Head of caudate nucleus (tissue), 42 donors: ENCODE measurements at regions of chr5 and their contacts with region 1.

Region 1: GRCh38 chr5:140346348-140347101 is at the start of gene HBEGF:
- DNase-seq: peak; percentile 61 to 94 (median 87)

Region 2: DNA sequence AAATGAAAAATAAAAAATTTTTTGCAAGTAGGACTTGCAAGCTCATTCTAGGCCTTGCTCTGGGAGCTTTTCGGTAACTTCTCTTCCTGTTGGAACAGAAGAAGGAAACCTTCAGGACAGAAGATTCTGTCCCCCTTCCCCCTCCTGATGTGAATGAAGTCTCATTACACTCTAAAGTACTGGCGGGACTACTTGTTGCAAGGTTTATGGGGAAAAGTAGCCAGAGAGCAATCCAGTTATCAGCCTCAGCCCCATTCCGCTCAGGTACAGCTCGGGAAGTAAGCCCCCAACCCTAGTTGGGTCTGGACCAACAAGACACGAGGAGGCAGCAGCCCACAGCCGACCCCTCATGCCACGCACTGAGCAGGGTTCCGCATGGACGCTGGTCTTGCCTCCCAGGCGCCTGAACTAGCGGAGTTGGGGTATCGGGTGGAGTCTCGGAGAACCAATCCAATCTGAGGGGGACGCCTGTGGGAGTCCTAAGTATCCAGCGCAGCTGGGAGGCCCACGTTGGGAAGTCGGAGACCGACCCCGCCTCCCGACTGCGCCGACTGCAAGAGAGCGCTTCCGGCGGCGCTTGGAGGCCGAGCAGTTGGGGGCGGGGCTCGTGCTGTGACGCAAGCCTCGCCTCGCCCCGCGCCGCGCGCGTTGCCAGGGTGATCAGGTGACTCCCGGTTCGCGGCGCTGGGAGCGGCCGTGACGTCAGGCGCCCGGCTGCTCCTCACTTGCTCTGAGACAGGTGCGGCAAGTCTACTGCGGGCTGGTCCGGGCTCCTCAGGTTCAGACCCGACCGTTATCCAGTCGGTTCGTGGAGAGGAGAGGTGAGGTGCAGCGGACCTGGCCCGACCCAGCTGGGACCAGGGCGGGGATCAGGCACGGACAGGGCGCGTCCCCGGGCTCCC is 171.8 kb before region 1 on chr5 and contains the start of gene CYSTM1:
- intact Hi-C with region 1: loop called (anchors 10 kb)
- DNase-seq: peak; percentile 86 to 98 (median 95)

Region 3: GRCh38 chr5:140292212-140293040 is 54.1 kb before region 1 on chr5:
- intact Hi-C with region 1: no loop called
- DNase-seq: no peak

Region 4: DNA sequence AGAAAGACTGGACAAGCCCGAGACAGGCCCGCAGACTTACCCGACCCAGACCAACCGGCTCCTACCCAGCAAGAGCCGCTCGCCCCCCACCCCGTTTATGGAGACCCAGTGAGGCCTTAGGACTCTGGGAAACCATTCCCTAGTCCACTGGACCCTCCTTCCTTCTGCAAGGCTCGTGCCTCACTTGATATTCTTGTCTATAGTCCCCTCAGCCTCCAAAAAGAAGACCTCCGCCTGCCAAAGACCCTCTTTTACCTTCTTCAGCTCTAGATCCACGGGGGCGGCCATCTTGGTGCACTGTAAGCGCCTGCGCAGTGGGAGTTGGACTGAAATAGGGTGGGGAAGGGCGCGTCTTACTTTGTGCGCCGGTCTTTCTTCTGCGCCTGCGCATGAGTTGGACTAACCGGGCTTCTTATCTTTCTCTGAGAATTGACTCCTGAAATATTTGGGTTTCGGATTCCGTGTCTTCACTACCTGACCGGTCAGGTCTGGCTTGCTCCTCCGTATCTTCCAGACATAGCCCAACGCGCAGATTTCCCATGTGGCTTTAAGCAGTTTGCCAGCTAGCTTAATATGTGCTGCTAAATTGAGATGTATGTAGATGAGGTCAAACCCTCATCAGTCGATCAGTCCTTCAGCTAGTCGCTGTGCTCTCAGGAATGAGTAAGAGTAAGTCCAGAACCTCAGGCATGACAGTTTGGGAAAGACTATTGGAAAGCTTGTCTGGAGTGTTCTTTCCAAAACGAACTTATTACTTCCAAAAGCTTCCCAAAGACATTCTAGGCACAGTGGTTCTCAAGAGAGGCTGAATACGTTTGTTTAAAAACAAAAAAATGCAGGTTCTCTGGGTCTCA is 43.5 kb before region 1 on chr5 and contains the start of gene PFDN1:
- intact Hi-C with region 1: loop called (anchors 5 kb)
- DNase-seq: peak; percentile 87 to 98 (median 95)

Region 5: DNA sequence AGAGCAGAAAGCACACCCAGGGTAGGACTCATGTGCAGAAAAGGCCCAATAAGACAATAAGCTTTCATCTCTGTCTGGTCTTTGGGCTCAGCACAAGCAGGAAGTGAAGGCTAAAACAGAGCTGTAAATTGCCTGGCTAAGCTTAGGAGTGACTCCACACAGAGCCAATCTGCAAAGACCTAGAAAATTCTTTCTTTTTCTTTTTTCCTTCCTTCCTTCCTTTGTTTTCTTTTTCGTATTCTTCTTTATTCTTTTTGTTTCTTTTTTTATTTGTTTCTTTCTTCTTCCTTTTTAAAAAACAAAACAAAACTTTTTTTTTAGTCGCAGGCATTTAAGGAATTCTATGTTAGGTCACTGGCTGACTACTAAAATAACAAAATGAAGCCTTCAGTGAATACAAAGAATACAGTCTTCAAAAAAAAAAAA is 230.3 kb after region 1 on chr5:
- intact Hi-C with region 1: no loop called
- DNase-seq: no peak